ENCODE measurements at regions of chr15 and their contacts with region 1.

Region 1: GRCh38 chr15:66497502-66498455 is at the start of gene SNAPC5:
- DNase-seq: peak; percentile 99
- ATAC-seq: peak; percentile 93
- H3K4me3 Mint-ChIP-seq: peak within 1 kb of the TSS; percentile 85
- H3K27ac Mint-ChIP-seq: peak within 1 kb of the TSS; percentile 94
- H3K4me1 Mint-ChIP-seq: peaks cover 67% of the 10 kb centered on the region
- H3K27me3 Mint-ChIP-seq: no peaks in the 10 kb centered on the region
- total RNA-seq, gene SNAPC5: 29.3 to 30.0 TPM

Region 2: DNA sequence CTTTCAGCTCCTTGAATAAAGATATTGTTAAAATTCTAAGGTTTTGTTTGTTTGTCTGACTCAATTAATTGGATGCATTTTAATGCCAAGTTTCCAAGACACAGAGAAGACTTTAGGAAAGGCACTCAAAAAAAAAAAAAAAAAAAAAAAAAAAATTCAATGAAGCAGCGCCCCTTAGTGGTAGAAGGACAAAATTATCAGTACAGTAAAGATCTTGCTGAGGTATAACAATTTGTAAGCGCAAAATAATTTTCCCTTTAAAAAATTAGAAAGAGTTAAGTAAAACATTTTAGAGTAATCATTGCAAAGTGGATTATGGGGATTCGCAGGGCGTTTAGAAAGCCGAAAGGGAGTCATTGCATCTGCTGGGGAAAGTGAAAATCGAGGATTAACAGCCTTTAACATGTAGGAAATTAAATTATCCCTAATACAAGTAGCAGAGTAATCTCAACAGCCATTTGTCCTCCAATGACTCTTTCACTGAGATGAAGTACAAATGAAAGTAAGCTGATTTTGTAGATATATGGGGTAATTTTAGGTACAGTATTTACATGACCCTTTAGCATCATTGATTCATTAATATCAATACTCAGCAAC is 210.2 kb before region 1 on chr15:
- CTCF ChIA-PET with region 1: interaction called, 16 read pairs
- DNase-seq: no peak
- ATAC-seq: no peak
- H3K4me3 Mint-ChIP-seq: no peak overlapping the region
- H3K27ac Mint-ChIP-seq: no peak overlapping the region
- H3K4me1 Mint-ChIP-seq: peaks cover 21% of the 10 kb centered on the region
- H3K27me3 Mint-ChIP-seq: no peaks in the 10 kb centered on the region

Region 3: DNA sequence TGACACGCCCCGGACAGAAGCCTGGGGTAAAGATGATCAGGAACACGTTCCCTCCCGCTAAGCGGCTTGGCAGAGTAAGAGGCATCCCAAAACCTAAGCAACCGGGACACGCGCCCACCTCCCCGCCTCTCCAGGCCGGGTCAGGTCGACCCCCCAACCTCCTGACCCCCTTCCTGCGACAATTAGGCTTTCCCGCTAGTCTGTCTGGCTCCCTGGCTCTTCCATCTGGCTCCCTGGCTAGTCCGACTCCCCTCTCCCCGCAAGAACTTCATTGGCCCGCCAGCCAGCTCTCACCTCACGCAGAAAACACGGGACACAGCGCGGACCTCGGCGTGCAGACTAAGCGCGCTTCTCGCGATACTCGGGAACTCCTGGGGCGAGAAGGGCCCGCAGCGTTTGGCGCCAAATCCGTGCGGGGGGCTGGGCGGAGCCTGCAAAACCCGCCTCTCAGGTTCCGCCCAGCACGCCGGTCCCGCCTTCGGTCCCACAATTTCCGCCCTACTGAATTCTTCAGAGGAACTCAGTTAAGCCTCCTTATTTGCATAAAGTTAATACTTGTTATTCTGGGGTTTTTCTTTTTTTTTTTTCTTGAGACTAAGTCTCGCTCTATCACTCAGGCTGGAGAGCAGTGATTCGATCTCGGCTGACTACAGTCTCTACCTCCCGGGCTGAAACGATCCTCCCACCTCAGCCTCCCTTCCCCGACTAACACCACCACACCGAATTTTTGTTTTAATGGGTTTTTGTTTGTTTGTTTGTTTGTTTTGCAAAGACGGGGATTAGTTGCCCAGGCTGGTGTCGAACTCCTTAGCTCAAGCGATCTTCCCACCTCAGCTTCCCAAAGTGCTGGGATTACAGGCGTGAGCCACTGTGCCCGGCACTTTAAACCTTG is 141.2 kb before region 1 on chr15 and contains the start of gene TIPIN:
- CTCF ChIA-PET with region 1: interaction called, 52 read pairs
- DNase-seq: peak; percentile 99
- ATAC-seq: peak; percentile 97
- H3K4me3 Mint-ChIP-seq: peak within 1 kb of the TSS; percentile 93
- H3K27ac Mint-ChIP-seq: peak within 1 kb of the TSS; percentile 97
- H3K4me1 Mint-ChIP-seq: peaks cover 30% of the 10 kb centered on the region
- H3K27me3 Mint-ChIP-seq: no peaks in the 10 kb centered on the region
- total RNA-seq, gene TIPIN: 34.3 to 40.2 TPM

Region 4: GRCh38 chr15:66386204-66387123 is 111.3 kb before region 1 on chr15 and contains the start of gene MAP2K1:
- CTCF ChIA-PET with region 1: interaction called, 119 read pairs
- DNase-seq: peak; percentile 99
- ATAC-seq: peak; percentile 87
- H3K4me3 Mint-ChIP-seq: peak within 1 kb of the TSS; percentile 97
- H3K27ac Mint-ChIP-seq: peak within 1 kb of the TSS; percentile 99
- H3K4me1 Mint-ChIP-seq: peaks cover 45% of the 10 kb centered on the region
- H3K27me3 Mint-ChIP-seq: no peaks in the 10 kb centered on the region
- total RNA-seq, gene MAP2K1: 83.3 to 83.5 TPM

Region 5: GRCh38 chr15:66401130-66402021 is 96.4 kb before region 1 on chr15:
- CTCF ChIA-PET with region 1: interaction called, 18 read pairs
- DNase-seq: peak; percentile 57
- ATAC-seq: peak; percentile 81
- H3K4me3 Mint-ChIP-seq: peak overlapping the region; percentile 51
- H3K27ac Mint-ChIP-seq: peak overlapping the region; percentile 68
- H3K4me1 Mint-ChIP-seq: peaks cover 58% of the 10 kb centered on the region
- H3K27me3 Mint-ChIP-seq: no peaks in the 10 kb centered on the region

Region 6: GRCh38 chr15:66483131-66483566 is 14.6 kb before region 1 on chr15:
- CTCF ChIA-PET with region 1: interaction called, 13 read pairs
- DNase-seq: no peak
- ATAC-seq: no peak
- H3K4me3 Mint-ChIP-seq: no peak overlapping the region
- H3K27ac Mint-ChIP-seq: no peak overlapping the region
- H3K4me1 Mint-ChIP-seq: no peaks in the 10 kb centered on the region
- H3K27me3 Mint-ChIP-seq: no peaks in the 10 kb centered on the region

Measured in activated CD8-positive, alpha-beta memory T cell treated with anti-CD3 and anti-CD28 coated beads, Interleukin-2, amount 10 ng/mL, durations not matched to agents 7 days and 5 days (primary cell).